Left ventricle myocardium inferior (tissue), 1 donor: ENCODE measurements at regions of chr16 and their contacts with region 1.

Region 1: DNA sequence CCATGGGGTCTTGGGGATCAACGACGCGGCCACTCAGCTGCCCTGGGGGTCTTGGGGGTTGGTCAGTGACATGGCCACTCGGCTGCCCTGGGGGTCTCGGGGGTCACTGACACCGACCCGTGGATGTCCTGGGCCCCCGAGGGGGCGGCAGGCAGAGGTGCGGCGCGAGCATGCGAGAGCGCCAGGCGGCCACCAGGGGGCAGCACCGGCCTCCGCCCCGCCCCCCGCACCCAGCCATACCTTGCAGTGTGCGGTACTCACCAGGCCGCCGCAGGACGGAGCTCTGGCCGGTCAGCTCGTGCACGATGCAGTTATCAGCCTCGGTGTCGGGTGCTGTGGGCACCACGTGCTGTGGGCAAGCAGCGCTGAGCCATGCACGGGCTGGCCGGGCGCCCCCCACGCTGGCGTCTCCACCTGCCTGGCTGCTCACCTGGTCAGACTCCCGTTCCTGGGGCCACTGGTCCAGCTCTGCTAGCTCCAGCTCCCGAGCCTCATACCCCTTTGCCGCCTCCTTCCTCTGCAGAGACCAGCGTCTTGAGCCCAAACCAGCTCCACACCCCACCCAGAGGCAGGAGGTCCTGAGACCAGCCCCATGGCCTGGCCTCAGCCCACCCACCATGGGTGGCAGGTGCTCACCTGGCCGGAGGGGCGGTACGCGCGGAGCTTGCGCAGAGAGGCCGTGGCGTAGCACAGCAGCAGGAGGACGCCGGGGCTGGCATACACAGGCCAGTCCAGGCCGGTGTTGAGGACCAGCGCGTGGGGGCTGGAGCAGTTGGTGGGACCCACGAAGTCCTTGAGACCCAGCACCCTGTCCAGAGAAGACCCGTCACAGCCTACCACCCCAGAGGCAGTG is 31.2 kb downstream of the CTU2 start:
- DNase-seq: peak; percentile 71
- H3K4me3 ChIP-seq: no peak overlapping the region
- H3K27ac ChIP-seq: no peak overlapping the region
- H3K4me1 ChIP-seq: peaks cover 6% of the 10 kb centered on the region
- H3K27me3 ChIP-seq: no peaks in the 10 kb centered on the region
- CTCF ChIP-seq: peak; percentile 98

Region 2: GRCh38 chr16:88505405-88506082 is 232.0 kb before region 1 on chr16:
- intact Hi-C with region 1: no loop called
- DNase-seq: no peak
- H3K4me3 ChIP-seq: no peak overlapping the region
- H3K27ac ChIP-seq: no peak overlapping the region
- H3K4me1 ChIP-seq: peaks cover 3% of the 10 kb centered on the region
- H3K27me3 ChIP-seq: no peaks in the 10 kb centered on the region
- CTCF ChIP-seq: peak; percentile 39

Region 3: DNA sequence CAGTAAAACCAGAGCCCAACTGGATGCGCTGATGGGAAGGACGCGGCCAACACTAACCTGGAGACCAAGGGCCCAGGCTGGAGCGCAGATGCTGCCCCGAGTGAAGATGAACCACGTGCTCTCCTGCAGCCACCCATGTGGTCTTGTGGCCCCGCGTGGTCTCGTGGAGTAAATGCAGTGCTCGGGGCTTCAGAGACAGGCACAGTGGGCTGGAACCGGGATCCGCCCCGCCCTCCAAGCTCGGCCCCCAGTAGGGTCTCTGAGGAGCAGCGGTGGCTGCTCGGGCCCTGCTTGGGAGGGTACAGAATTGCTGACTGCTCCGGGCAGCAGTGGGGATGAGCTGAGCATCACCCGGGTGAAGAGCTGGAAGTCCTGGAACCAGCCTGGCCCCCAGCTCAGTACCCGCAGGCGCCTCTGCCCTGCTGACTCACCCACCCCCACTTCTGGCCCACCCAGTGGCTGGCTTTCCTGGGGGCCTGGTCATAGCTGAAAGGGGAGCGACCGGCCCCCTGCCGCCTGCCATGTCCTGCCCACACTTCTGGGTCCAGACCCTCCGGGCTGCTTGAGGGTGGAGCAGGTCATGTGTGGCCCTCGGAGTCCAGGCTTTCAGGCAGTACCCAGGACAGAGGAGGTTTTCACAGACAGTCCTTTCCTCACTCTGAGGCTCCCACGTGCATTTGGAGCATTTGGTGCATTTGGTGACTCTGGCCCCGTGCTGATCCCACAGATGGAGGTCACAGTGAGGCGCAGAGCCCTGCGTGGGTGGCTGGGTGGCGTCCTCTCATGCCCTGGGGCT is 54.4 kb after region 1 on chr16:
- intact Hi-C with region 1: no loop called
- DNase-seq: no peak
- H3K4me3 ChIP-seq: no peak overlapping the region
- H3K27ac ChIP-seq: no peak overlapping the region
- H3K4me1 ChIP-seq: peaks cover 5% of the 10 kb centered on the region
- H3K27me3 ChIP-seq: peaks cover 66% of the 10 kb centered on the region
- CTCF ChIP-seq: no peak

Region 4: GRCh38 chr16:89217388-89218191 is 480.1 kb after region 1 on chr16 and contains the start of gene ZNF778:
- intact Hi-C with region 1: loop called (anchors 10 kb)
- DNase-seq: peak; percentile 85
- H3K4me3 ChIP-seq: peak within 1 kb of the TSS; percentile 90
- H3K27ac ChIP-seq: peak within 1 kb of the TSS; percentile 97
- H3K4me1 ChIP-seq: peaks cover 33% of the 10 kb centered on the region
- H3K27me3 ChIP-seq: no peaks in the 10 kb centered on the region
- CTCF ChIP-seq: no peak
- total RNA-seq, gene ZNF778: 8.7 TPM